ENCODE measurements at regions of chr1 and their contacts with region 1.

Region 1: GRCh38 chr1:207345644-207346561 is 24.4 kb downstream of the CD55 start:
- DNase-seq: no peak
- ATAC-seq: peak; percentile 17
- H3K4me3 ChIP-seq: no peak overlapping the region
- H3K4me3 Mint-ChIP-seq: peak overlapping the region in 9 of 10 donors; percentile 4 to 77 (median 49)
- H3K27ac ChIP-seq: no peak overlapping the region
- H3K27ac Mint-ChIP-seq: peak overlapping the region in 6 of 9 donors; percentile 8 to 78 (median 52)
- H3K4me1 ChIP-seq: peaks cover 0 to 64% of the 10 kb centered on the region in 2 donors
- H3K4me1 Mint-ChIP-seq: peaks cover 64 to 98% (median 96%) of the 10 kb centered on the region in 7 donors
- H3K27me3 ChIP-seq: no peaks in the 10 kb centered on the region
- H3K27me3 Mint-ChIP-seq: no peaks in the 10 kb centered on the region

Region 2: GRCh38 chr1:207362962-207363858 is 17.3 kb after region 1 on chr1:
- CTCF ChIA-PET with region 1: no interaction called
- POLR2A ChIA-PET with region 1: interaction called, 3 read pairs
- intact Hi-C with region 1: loop called in 1 of 2 experiments (anchors 2 kb)
- DNase-seq: peak in 7 of 9 donors; percentile 24 to 66 (median 38)
- ATAC-seq: peak; percentile 92
- H3K4me3 ChIP-seq: no peak overlapping the region
- H3K4me3 Mint-ChIP-seq: no peak overlapping the region
- H3K27ac ChIP-seq: peak overlapping the region; percentile 20
- H3K27ac Mint-ChIP-seq: no peak overlapping the region
- H3K4me1 ChIP-seq: peaks cover 0 to 5% of the 10 kb centered on the region in 2 donors
- H3K4me1 Mint-ChIP-seq: peaks cover 0 to 14% (median 10%) of the 10 kb centered on the region in 7 donors
- H3K27me3 ChIP-seq: no peaks in the 10 kb centered on the region
- H3K27me3 Mint-ChIP-seq: no peaks in the 10 kb centered on the region

Measured in naive thymus-derived CD4-positive, alpha-beta T cell (primary cell).